HEK293 (cell line): ENCODE measurements at regions of chr7 and their contacts with region 1.

Region 1: DNA sequence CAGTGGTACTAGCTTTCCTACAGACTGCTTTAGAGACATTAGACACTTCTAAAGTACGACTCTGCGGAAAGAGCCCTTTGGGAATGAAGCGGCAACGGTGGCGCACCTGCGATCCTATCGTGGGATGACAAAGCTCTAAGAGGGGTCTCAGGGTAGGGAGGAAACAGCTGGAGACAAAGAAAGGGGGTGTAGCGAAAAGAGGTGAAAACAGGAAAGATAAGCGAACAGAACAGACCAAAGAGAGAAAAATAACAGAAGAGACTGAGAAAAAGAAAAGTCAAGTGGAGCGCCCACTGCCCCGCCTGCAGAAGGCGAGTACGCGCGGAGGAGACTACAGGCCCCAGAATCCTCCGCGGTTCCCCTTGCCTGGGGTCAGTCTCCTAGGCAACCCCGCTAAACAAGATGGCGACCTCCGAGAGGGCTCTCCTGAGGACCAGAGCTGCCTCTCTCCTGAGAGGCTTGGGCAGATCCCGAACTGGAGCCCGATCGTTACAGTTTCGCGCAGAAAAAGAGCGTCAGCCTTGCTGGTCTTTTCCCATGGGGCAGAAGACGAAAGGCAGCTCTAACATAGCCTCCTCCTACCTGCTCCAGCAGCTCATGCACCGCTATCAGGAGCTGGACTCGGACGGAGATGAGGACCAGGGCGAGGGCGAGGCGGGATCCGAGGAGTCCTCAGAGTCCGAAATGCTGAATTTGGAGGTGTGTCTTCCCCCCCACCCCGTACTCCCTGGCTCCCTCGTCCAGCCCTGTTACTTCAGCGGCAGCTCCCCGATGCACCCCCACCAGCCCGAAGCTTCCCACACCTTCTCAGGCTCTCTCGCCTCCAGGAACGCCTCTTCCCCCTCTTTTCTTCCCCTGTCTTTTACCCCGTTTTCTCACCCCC is at the start of gene LRGUK:
- H3K4me3 ChIP-seq: peak within 1 kb of the TSS; percentile 81
- H3K27ac ChIP-seq: no peak within 1 kb of the TSS
- H3K4me1 ChIP-seq: no peaks in the 10 kb centered on the region
- CTCF ChIP-seq: no peak

Region 2: GRCh38 chr7:133517766-133518165 is 609.4 kb before region 1 on chr7:
- CTCF ChIA-PET with region 1: interaction called, 10 read pairs
- POLR2A ChIA-PET with region 1: no interaction called
- H3K4me3 ChIP-seq: no peak overlapping the region
- H3K27ac ChIP-seq: no peak overlapping the region
- H3K4me1 ChIP-seq: no peaks in the 10 kb centered on the region
- CTCF ChIP-seq: no peak

Region 3: GRCh38 chr7:133985300-133985699 is 141.9 kb before region 1 on chr7:
- CTCF ChIA-PET with region 1: no interaction called
- POLR2A ChIA-PET with region 1: interaction called, 12 read pairs
- H3K4me3 ChIP-seq: no peak overlapping the region
- H3K27ac ChIP-seq: no peak overlapping the region
- H3K4me1 ChIP-seq: no peaks in the 10 kb centered on the region
- CTCF ChIP-seq: no peak

Region 4: GRCh38 chr7:134140889-134141867 is 14.0 kb after region 1 on chr7:
- CTCF ChIA-PET with region 1: interaction called, 12 read pairs
- POLR2A ChIA-PET with region 1: no interaction called
- H3K4me3 ChIP-seq: no peak overlapping the region
- H3K27ac ChIP-seq: no peak overlapping the region
- H3K4me1 ChIP-seq: no peaks in the 10 kb centered on the region
- CTCF ChIP-seq: peak; percentile 56; the same call in 1 of the 2 replicates